A673 (cell line): ENCODE measurements at regions of chr5 and their contacts with region 1.

Region 1: DNA sequence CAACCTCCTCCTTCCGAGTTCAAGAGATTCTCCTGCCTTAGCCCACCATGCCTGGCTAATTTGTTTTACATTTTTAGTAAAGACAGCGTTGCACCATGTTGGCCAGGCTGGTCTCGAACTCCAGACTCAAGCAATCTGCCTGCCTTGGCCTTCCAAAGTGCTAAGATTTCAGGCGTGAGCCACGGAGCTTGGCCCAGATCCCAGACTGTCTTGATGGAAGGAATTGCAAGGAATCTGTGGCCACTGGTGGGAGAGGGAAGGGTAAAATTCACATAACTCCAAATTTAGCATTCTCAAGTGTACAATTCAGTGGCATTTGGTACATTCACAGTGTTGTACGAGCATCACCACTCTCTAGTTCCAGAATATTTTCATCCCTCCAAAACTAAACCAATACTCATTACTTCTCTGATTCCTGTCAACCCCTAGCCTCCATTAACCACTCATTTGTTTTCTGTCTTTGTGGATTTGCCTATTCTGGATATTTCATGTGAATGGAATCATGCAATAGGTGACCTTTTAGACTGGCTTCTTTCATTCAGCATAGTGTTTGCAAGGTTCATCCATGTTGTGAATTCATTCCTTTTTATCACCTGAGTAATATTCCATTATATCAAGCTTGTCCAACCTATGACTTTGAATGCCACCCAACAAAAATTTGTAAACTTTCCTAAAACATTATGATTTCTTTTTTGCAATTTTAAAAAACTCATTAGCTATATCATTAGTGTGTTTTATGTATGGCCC is 8.9 kb upstream of the MYO10 start:
- DNase-seq: peak; percentile 61
- H3K4me3 ChIP-seq: no peak overlapping the region
- H3K27ac ChIP-seq: peak overlapping the region; percentile 99
- H3K4me1 ChIP-seq: peaks cover 30% of the 10 kb centered on the region
- H3K27me3 ChIP-seq: no peaks in the 10 kb centered on the region
- CTCF ChIP-seq: no peak

Region 2: DNA sequence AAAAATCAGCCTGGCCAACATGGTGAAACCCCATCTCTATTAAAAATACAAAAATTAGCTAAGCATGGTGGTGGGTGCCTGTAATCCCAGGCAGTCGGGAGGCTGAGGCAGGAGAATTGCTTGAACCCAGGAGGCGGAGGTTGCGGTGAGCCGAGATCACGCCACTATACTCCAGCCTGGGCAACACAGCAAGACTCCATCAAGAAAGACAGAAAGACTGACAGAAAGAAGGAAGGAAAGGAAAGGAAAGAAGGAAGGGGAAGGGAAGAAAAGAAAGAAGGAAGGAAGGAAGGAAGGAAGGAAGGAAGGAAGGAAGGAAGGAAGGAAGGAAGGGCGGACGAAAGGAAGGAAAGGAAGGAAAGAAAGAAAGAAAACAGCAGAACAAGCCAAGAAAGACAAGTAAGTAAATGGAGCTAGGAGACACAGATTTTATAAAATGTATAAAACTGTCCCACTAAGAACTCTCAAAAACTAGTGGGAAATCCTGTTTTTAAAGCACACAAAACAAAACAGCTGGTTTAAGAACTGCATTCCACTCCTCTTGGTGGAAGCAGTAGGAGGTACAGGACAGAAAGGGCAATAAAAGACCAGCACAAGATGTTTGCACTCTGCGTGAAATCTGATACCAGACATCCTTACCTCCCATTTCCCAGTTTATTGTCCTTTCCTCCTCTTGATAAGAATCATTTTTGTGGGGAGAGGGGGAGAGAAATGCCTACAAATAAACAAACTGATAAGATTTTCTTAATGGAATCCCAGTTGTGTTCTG is 55.6 kb before region 1 on chr5:
- CTCF ChIA-PET with region 1: no interaction called
- POLR2A ChIA-PET with region 1: no interaction called
- intact Hi-C with region 1: loop called (anchors 2 kb)
- DNase-seq: peak; percentile 90
- H3K4me3 ChIP-seq: peak overlapping the region; percentile 18
- H3K27ac ChIP-seq: peak overlapping the region; percentile 88
- H3K4me1 ChIP-seq: peaks cover 94% of the 10 kb centered on the region
- H3K27me3 ChIP-seq: no peaks in the 10 kb centered on the region
- CTCF ChIP-seq: no peak

Region 3: GRCh38 chr5:16927613-16928012 is 17.4 kb before region 1 on chr5:
- CTCF ChIA-PET with region 1: interaction called, 11 read pairs
- POLR2A ChIA-PET with region 1: no interaction called
- intact Hi-C with region 1: no loop called
- DNase-seq: no peak
- H3K4me3 ChIP-seq: no peak overlapping the region
- H3K27ac ChIP-seq: no peak overlapping the region
- H3K4me1 ChIP-seq: peaks cover 45% of the 10 kb centered on the region
- H3K27me3 ChIP-seq: no peaks in the 10 kb centered on the region
- CTCF ChIP-seq: no peak

Region 4: DNA sequence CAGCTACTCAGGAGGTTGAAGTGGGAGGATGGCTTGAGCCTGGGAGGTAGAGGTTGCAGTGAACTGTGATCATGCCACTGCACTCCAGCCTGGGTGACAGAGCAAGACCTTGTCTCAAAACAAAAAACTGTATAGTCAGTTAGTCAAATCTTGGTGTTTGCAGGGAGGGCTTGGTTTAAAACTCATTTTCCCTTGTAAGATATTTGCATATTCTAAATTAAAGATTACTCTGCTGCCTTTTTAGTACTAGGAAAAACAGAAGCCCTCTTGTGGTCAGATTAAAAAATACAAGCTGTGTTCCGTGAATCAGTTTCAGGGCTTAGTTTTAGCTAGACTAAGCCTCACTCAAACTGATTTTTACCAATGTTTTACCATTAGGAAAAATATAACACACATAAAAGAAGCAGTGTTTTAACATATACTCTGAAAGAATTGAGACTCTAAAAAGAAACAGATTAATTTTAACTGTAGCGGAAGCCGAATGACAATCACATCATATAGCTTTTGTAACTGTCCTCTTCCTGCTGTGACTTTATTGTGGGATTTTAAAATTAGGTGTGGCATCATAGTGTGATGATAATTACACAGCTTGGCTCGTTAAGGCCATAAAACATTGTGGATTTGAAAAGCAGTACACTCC is 187.6 kb after region 1 on chr5:
- CTCF ChIA-PET with region 1: interaction called, 6 read pairs
- POLR2A ChIA-PET with region 1: interaction called, 10 read pairs
- intact Hi-C with region 1: loop called (anchors 1 kb)
- DNase-seq: peak; percentile 95
- H3K4me3 ChIP-seq: no peak overlapping the region
- H3K27ac ChIP-seq: peak overlapping the region; percentile 87
- H3K4me1 ChIP-seq: peaks cover 21% of the 10 kb centered on the region
- H3K27me3 ChIP-seq: no peaks in the 10 kb centered on the region
- CTCF ChIP-seq: peak; percentile 74

Region 5: DNA sequence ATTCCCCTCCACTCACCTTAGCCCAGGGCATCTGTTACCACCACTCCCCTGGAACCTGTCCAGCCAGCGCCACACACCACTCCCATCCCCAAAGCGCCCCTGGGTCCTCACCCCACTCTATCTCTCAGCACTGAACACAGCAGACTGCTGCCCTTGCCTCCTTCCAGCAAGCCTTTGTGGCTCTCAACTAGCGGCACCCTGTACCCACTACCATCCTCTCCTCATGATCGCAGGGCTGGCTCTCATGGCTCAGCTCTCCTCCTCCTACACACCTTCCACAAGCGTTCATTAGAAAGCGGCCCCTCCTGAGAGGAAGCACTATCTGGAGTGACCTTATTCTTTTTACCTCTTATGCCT is 259.1 kb after region 1 on chr5:
- CTCF ChIA-PET with region 1: no interaction called
- POLR2A ChIA-PET with region 1: no interaction called
- intact Hi-C with region 1: loop called (anchors 1 kb)
- DNase-seq: no peak
- H3K4me3 ChIP-seq: no peak overlapping the region
- H3K27ac ChIP-seq: peak overlapping the region; percentile 11
- H3K4me1 ChIP-seq: peaks cover 23% of the 10 kb centered on the region
- H3K27me3 ChIP-seq: no peaks in the 10 kb centered on the region
- CTCF ChIP-seq: no peak

Region 6: GRCh38 chr5:17282283-17283120 is 337.5 kb after region 1 on chr5:
- CTCF ChIA-PET with region 1: no interaction called
- POLR2A ChIA-PET with region 1: no interaction called
- intact Hi-C with region 1: loop called (anchors 2 kb)
- DNase-seq: peak; percentile 98
- H3K4me3 ChIP-seq: peak overlapping the region; percentile 30
- H3K27ac ChIP-seq: peak overlapping the region; percentile 97
- H3K4me1 ChIP-seq: peaks cover 68% of the 10 kb centered on the region
- H3K27me3 ChIP-seq: no peaks in the 10 kb centered on the region
- CTCF ChIP-seq: no peak

Region 7: DNA sequence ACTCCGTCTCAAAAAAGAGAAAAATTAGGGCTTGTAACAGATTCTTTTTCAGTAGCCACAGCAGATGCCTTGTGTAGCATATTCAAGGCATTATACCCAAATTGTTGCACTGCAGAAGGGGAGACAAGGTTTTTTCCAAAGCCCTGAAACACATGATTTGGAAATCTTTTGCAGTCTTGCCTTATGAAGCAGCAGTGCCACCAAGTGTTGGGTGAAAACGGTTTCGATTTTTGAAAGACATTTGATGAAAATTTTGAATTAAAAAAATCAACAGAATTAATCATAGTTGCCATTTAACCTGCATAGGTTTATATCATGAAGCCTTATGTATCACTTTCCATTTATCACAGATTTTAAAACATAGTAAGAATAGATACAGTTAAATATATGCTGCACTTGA is 1168.7 kb after region 1 on chr5:
- CTCF ChIA-PET with region 1: no interaction called
- POLR2A ChIA-PET with region 1: no interaction called
- intact Hi-C with region 1: loop called (anchors 5 kb)
- DNase-seq: peak; percentile 69
- H3K4me3 ChIP-seq: no peak overlapping the region
- H3K27ac ChIP-seq: no peak overlapping the region
- H3K4me1 ChIP-seq: peaks cover 21% of the 10 kb centered on the region
- H3K27me3 ChIP-seq: no peaks in the 10 kb centered on the region
- CTCF ChIP-seq: peak; percentile 59